ENCODE measurements at regions of chrX and their contacts with region 1.

Region 1: DNA sequence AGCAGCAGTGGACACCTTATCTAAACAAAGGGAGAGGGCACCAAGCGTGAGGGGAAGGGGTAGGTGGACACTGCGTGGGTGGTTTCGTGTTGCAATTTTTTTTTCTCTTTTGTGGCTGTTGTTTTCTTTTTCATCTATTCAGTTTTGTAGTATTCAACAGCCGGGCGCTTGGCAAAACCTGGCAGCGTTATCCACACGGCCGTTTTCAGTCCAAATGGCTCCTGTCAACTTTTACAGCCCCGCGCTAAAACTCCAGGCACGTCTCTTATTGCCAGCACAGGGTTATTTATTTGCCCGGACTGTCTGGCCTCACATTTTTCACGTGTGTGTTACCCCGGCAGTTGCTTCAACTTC is 192.2 kb downstream of the BCOR start:
- DNase-seq: no peak
- H3K4me3 Mint-ChIP-seq: no peak overlapping the region
- H3K27ac Mint-ChIP-seq: no peak overlapping the region
- H3K4me1 Mint-ChIP-seq: peaks cover 19% of the 10 kb centered on the region
- H3K27me3 Mint-ChIP-seq: peaks cover 2% of the 10 kb centered on the region

Region 2: GRCh38 chrX:39883666-39884065 is 21.8 kb before region 1 on chrX:
- CTCF ChIA-PET with region 1: interaction called, 3 read pairs
- POLR2A ChIA-PET with region 1: no interaction called
- intact Hi-C with region 1: loop called (anchors 2 kb)
- DNase-seq: peak; percentile 72
- H3K4me3 Mint-ChIP-seq: no peak overlapping the region
- H3K27ac Mint-ChIP-seq: peak overlapping the region; percentile 71
- H3K4me1 Mint-ChIP-seq: peaks cover 21% of the 10 kb centered on the region
- H3K27me3 Mint-ChIP-seq: peaks cover under 1% of the 10 kb centered on the region

Region 3: GRCh38 chrX:40201329-40201885 is 295.9 kb after region 1 on chrX:
- CTCF ChIA-PET with region 1: no interaction called
- POLR2A ChIA-PET with region 1: no interaction called
- intact Hi-C with region 1: no loop called
- DNase-seq: peak; percentile 34
- H3K4me3 Mint-ChIP-seq: no peak overlapping the region
- H3K27ac Mint-ChIP-seq: no peak overlapping the region
- H3K4me1 Mint-ChIP-seq: peaks cover 8% of the 10 kb centered on the region
- H3K27me3 Mint-ChIP-seq: no peaks in the 10 kb centered on the region

Region 4: GRCh38 chrX:41824551-41824950 is 1919.0 kb after region 1 on chrX:
- CTCF ChIA-PET with region 1: no interaction called
- POLR2A ChIA-PET with region 1: no interaction called
- intact Hi-C with region 1: no loop called
- DNase-seq: no peak
- H3K4me3 Mint-ChIP-seq: no peak overlapping the region
- H3K27ac Mint-ChIP-seq: no peak overlapping the region
- H3K4me1 Mint-ChIP-seq: peaks cover 12% of the 10 kb centered on the region
- H3K27me3 Mint-ChIP-seq: no peaks in the 10 kb centered on the region

Measured in activated CD4-positive, alpha-beta memory T cell treated with anti-CD3 and anti-CD28 coated beads for 36 hours (primary cell).